G401 (cell line): ENCODE measurements at regions of chr3 and their contacts with region 1.

Region 1: DNA sequence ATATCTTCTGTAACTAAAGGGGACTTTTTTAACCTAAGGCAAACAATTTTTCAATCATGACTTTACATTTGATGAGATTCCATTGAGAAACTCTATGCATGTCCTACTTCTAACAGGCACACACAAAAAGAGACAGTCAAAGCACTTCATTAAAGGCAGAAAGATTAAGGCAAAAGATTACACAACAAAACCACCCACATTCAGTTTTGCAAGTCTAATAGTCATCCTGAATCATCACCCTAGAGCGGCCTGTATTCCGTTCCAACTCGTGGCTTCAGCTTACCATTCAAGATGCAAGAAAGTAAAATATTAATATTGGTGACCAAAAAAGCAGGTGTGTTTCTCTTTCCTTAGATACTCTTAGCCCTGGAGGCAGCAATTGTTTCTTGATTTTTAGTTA is 205.9 kb downstream of the P3H2 start:
- DNase-seq: no peak

Region 2: GRCh38 chr3:189883113-189883753 is 31.6 kb before region 1 on chr3:
- in situ Hi-C with region 1: loop called (anchors 5 kb)
- DNase-seq: no peak

Region 3: DNA sequence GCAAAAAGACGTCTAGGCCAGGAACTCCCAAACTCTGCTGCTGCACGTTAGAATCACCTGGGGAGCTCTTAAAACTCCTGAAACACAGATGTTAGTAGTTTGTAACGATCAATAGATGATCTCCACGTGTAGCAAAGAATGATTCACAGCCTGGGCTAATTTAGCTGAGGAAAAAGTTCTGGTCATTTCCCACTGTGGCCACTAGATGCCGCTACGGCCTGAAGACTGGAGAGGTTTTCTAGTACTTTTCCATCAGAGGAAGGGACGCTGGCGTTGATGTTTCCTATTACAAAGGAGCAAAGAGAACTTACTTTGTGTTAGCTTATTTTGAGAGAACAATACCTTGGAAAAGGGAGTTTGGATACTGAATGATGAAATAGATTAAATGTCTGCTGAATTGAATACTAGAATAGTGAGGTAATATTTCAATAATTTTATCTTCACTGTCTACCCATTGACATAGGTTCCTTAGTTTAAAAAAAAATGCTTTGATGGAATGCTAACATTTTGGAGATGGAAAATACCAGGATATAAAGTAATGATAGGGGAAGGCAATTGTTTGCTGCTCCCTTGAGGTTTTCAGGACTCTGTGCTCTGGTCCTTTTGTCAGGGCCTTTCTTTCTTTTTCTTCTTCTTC is 46.8 kb after region 1 on chr3:
- in situ Hi-C with region 1: no loop called
- DNase-seq: peak; percentile 68